WTC11 (cell line): ENCODE measurements at regions of chr19 and their contacts with region 1.

Region 1: GRCh38 chr19:13033819-13034611 is 38.7 kb downstream of the NFIX start:
- DNase-seq: peak; percentile 85
- ATAC-seq: peak; percentile 91
- H3K4me3 Mint-ChIP-seq: no peak overlapping the region
- H3K27ac Mint-ChIP-seq: no peak overlapping the region
- H3K4me1 Mint-ChIP-seq: peaks cover 8% of the 10 kb centered on the region
- H3K27me3 Mint-ChIP-seq: peaks cover 81% of the 10 kb centered on the region
- CTCF ChIP-seq: peak; percentile 53

Region 2: DNA sequence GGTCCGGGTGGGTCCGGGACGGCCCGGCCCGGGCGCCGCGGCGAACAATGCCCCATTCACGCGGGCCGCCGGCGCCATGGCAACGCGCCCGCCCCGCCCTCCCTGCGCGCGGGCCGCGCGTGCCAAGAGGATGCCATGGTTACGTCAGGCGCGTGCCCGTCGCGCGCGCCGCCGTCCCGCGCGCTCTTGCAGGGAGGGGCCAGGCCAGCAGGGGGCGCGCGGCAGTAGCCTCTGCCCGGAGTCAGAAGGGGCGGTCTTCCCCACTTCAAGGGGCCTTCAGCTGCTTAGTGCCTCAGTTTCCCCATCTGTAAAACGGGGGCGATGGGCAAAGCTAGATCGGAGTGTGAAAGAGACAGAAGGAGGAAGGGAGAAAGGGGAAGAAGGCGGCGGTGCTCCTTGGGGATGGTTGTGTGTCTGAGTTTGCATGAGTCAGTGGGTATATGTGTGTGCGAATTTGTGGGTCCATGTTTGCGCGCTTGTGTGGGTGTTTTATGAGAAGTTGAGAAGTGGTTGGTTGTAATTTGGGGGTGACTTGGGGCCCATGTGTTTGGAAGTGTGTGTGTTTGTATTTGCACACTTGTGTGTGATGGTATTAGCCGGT is 50.4 kb before region 1 on chr19:
- CTCF ChIA-PET with region 1: interaction called, 116 read pairs
- POLR2A ChIA-PET with region 1: no interaction called
- DNase-seq: peak; percentile 81
- ATAC-seq: peak; percentile 76
- H3K4me3 Mint-ChIP-seq: no peak overlapping the region
- H3K27ac Mint-ChIP-seq: no peak overlapping the region
- H3K4me1 Mint-ChIP-seq: peaks cover 6% of the 10 kb centered on the region; the same call in 1 of the 2 replicates
- H3K27me3 Mint-ChIP-seq: peaks cover 39% of the 10 kb centered on the region
- CTCF ChIP-seq: peak; percentile 94

Region 3: GRCh38 chr19:13012690-13013608 is 21.1 kb before region 1 on chr19:
- CTCF ChIA-PET with region 1: interaction called, 13 read pairs
- POLR2A ChIA-PET with region 1: no interaction called
- DNase-seq: peak; percentile 44
- ATAC-seq: no peak
- H3K4me3 Mint-ChIP-seq: peak overlapping the region; percentile 58
- H3K27ac Mint-ChIP-seq: no peak overlapping the region
- H3K4me1 Mint-ChIP-seq: peaks cover 59% of the 10 kb centered on the region
- H3K27me3 Mint-ChIP-seq: peaks cover 100% of the 10 kb centered on the region
- CTCF ChIP-seq: no peak

Region 4: DNA sequence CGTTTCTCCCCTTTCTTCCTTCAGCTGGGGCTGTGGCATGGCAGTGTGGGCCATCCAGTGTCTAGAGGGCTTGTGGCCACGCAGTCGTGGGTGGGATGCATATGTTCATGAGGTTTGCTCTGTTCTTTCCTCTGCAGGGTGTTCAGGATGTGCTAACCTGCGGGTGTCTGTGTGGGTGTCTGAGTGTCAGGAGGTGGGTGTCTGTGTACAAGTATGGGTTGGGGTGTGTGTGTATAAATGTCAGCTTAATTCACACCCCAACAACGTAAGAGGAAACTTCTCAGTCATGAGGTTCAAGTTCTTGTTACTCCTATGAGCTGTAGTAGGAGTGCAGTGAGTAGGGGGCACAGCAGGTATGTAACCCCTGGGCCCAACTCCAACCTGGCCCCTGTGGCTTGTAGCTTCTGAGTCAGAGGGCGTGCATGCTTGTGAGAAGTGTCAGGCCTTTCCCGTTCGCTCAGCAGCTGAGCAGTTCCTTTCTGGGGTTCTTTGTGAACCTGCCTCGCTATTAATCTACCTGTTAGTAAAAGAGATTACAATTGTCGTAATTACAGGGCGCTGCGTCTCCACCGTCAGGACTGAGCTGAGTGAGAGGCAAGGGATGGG is 10.3 kb after region 1 on chr19:
- CTCF ChIA-PET with region 1: interaction called, 20 read pairs
- POLR2A ChIA-PET with region 1: interaction called, 3 read pairs
- DNase-seq: no peak
- ATAC-seq: no peak
- H3K4me3 Mint-ChIP-seq: no peak overlapping the region
- H3K27ac Mint-ChIP-seq: no peak overlapping the region
- H3K4me1 Mint-ChIP-seq: peaks cover 4% of the 10 kb centered on the region
- H3K27me3 Mint-ChIP-seq: peaks cover 79% of the 10 kb centered on the region
- CTCF ChIP-seq: no peak

Region 5: DNA sequence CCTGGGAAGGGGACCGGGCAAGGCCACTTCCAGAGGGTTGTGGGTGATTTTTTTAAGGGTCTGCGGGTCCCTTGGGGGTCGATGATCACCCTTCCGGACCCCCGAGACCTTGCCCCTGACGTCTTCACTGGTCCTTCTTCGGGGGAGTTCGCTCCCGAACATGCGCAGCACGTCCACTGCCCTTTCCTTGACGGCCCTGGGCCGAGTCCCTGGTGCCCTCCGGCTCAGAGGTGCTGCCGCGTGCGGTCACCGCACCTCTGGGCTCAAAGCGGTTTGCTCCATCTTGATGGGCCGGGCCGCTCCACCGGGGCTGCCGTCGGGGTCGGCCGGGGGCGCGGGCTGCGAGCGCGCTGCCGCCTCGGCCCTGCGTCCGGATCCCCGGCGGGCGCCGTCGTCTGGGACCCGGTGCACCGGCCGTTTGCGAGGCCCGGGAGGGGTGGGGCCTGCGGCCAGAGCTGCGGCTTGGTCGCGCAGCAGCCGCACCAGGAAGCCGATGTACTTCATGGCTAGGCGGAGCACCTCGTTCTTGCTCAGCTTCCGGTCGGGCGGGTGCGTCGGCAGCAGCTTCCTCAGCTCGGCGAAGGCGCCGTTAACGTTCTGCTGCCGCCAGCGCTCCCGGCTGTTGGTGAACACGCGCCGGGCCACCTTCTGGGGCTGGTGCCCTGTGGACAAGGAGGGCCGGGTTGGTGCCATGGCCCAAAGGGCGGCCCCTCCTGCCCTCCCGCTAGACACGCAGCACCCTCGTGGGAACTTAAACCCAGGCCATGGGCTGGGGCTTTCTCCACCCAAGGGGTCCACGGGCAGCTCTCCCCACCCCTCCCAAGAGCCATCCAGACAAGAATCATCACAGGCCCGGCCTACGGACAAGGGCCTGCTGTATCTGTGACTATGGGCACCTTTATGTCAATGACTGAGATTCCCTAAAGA is 65.3 kb after region 1 on chr19:
- CTCF ChIA-PET with region 1: interaction called, 110 read pairs
- POLR2A ChIA-PET with region 1: no interaction called
- DNase-seq: peak; percentile 69
- ATAC-seq: no peak
- H3K4me3 Mint-ChIP-seq: peak overlapping the region; percentile 57
- H3K27ac Mint-ChIP-seq: no peak overlapping the region
- H3K4me1 Mint-ChIP-seq: peaks cover 23% of the 10 kb centered on the region
- H3K27me3 Mint-ChIP-seq: peaks cover 77% of the 10 kb centered on the region
- CTCF ChIP-seq: no peak